Posterior cingulate gyrus (tissue), 11 donors: ENCODE measurements at regions of chr11 and their contacts with region 1.

Region 1: GRCh38 chr11:107043242-107044006 is 25.1 kb upstream of the GUCY1A2 start:
- DNase-seq: no peak

Region 2: GRCh38 chr11:106156290-106156937 is 887.0 kb before region 1 on chr11:
- intact Hi-C with region 1: loop called (anchors 10 kb)
- DNase-seq: peak in 2 of 10 donors; percentile 8 to 13